Activated CD4-positive, alpha-beta memory T cell treated with anti-CD3 and anti-CD28 coated beads, Interleukin-2, amount 10 ng/mL, durations not matched to agents 7 days and 5 days (primary cell): ENCODE measurements at regions of chr7 and their contacts with region 1.

Region 1: GRCh38 chr7:134986363-134987251 is at the start of gene AGBL3:
- DNase-seq: peak; percentile 94
- H3K4me3 Mint-ChIP-seq: peak within 1 kb of the TSS; percentile 98
- H3K27ac Mint-ChIP-seq: peak within 1 kb of the TSS; percentile 90
- H3K4me1 Mint-ChIP-seq: peaks cover 34% of the 10 kb centered on the region
- H3K27me3 Mint-ChIP-seq: no peaks in the 10 kb centered on the region
- total RNA-seq, gene AGBL3: 2.8 to 3.4 TPM

Region 2: DNA sequence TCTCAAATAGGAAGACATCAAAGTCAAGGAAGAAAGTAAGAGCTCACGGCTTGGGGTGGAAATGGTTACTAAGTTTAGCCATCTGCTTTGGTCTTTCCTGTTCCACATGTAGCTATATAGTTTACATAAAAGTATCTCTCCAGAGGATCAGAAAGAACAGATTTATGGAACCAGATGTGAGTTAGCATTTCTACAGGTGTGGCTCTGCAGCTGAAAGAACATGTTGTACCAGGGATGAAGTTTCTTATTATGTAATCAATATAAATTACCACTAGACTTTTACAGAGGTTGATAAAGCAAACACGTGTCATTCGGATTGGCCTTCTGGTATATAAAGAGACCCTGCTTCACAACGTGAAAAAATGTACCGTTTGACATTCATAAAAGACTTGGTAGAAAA is 187.2 kb before region 1 on chr7:
- CTCF ChIA-PET with region 1: no interaction called
- POLR2A ChIA-PET with region 1: no interaction called
- DNase-seq: no peak
- H3K4me3 Mint-ChIP-seq: no peak overlapping the region
- H3K27ac Mint-ChIP-seq: no peak overlapping the region
- H3K4me1 Mint-ChIP-seq: no peaks in the 10 kb centered on the region
- H3K27me3 Mint-ChIP-seq: peaks cover 6% of the 10 kb centered on the region

Region 3: DNA sequence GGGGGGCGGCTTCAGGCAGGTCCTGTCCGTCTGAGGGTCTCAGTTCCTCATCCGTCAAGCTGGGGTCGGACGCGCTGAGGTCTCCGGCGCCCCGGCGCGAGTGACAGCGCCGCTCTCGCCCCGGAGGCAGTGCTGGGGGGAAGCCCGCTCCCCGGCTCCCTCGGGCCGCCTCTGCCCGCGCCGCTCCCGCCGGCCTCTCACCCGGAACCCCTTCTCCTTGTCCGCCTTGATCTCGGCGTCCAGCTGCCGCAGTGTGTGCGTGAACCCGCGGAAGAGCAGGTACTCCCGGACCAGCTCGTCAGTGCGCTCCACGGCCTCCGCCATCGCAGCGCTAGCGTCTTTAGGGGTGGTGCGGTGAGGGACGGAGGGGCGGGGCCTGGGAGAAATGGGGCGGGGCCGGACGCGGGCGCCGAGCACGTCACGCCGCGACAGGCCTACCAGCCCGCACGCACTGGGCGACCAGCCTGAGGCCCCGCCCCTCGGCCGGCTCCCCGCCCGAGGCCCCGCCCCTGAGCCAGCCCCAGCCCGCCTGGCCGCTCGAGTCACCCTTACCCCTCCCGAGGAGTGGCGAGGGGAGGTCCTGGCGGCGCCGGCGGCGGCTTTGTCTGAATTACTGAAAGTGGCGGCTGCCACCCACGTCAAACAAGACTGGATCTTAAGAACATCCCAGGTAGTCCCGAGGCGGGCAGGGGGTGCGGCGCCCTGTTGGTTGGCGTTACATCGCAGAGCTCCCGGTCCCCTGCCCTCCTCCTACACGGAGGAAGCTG is 224.8 kb after region 1 on chr7 and contains the start of gene WDR91:
- CTCF ChIA-PET with region 1: interaction called, 20 read pairs
- POLR2A ChIA-PET with region 1: interaction called, 4 read pairs
- DNase-seq: peak; percentile 97
- H3K4me3 Mint-ChIP-seq: peak within 1 kb of the TSS; percentile 94
- H3K27ac Mint-ChIP-seq: peak within 1 kb of the TSS; percentile 91
- H3K4me1 Mint-ChIP-seq: peaks cover 30% of the 10 kb centered on the region
- H3K27me3 Mint-ChIP-seq: no peaks in the 10 kb centered on the region
- total RNA-seq, gene WDR91: 10.7 to 11.6 TPM